Sigmoid colon (tissue), 7 donors: ENCODE measurements at regions of chr6 and their contacts with region 1.

Region 1: DNA sequence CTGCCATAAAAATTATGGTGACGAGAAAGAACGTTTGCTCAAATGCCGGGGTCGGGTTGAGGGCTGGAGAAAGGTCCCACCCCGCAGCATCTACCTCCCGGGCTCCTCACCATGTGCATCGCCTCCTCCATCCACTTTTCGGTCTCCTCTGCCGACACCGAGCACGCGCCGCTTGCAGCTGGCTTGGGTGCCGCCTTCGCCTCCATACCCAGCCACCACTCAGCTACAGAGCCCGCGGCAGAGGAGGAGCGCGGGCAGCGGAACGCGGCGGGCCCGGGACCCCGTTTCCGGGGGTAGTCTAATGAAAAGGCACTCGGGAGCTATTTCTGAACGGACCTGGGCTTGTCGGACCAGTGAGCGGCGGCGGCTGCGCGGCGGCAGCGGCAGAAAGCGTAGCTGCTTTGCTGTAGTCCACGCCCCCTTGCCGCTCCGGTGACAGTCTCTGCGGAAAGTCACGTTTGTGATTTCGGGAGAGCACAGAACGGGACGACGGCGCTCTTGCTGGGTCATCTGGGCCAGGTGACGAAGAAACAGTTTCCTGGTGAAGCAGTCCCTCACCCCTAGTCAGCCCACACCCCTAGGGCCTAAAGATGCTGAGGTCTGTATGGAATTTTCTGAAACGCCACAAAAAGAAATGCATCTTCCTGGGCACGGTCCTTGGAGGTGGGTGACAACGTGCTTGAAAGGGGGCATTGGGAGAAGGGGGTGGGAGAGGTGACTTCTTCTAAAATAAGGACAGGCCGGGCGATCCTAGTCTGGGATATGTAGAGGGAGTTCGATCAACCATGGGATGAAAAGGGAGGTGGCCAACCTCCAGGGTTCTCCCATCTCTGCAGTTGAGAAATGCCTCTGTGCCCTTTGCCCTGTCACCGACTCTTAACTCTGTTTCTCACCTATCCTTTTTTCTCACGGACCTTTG is at the starts of genes ADAT2 and PEX3:
- DNase-seq: peak; percentile 95
- H3K4me3 ChIP-seq: peak within 1 kb of the TSS; percentile 52 to 88 (median 76)
- H3K27ac ChIP-seq: peak within 1 kb of the TSS; percentile 69 to 79 (median 76)
- H3K4me1 ChIP-seq: peaks cover 0 to 29% (median 20%) of the 10 kb centered on the region in 4 donors
- H3K27me3 ChIP-seq: no peaks in the 10 kb centered on the region
- CTCF ChIP-seq: no peak
- EP300 ChIP-seq: no peak
- POLR2A ChIP-seq: peak; percentile 28 to 49
- total RNA-seq, gene ADAT2: 2.2 to 8.7 (median 2.9) TPM
- total RNA-seq, gene PEX3: 10.6 to 16.1 (median 12.3) TPM

Region 2: GRCh38 chr6:143510991-143511891 is 60.5 kb after region 1 on chr6 and contains the start of gene FUCA2:
- intact Hi-C with region 1: loop called (anchors 5 kb)
- DNase-seq: peak; percentile 96
- H3K4me3 ChIP-seq: peak within 1 kb of the TSS; percentile 55 to 74 (median 70)
- H3K27ac ChIP-seq: peak within 1 kb of the TSS; percentile 79 to 91 (median 88)
- H3K4me1 ChIP-seq: peaks cover 0 to 34% (median 29%) of the 10 kb centered on the region in 4 donors
- H3K27me3 ChIP-seq: no peaks in the 10 kb centered on the region
- CTCF ChIP-seq: no peak
- EP300 ChIP-seq: no peak
- POLR2A ChIP-seq: peak; percentile 39 to 66
- total RNA-seq, gene FUCA2: 14.9 to 24.3 (median 19.7) TPM